Heart right ventricle (tissue), 16 donors: ENCODE measurements at regions of chr5 and their contacts with region 1.

Region 1: DNA sequence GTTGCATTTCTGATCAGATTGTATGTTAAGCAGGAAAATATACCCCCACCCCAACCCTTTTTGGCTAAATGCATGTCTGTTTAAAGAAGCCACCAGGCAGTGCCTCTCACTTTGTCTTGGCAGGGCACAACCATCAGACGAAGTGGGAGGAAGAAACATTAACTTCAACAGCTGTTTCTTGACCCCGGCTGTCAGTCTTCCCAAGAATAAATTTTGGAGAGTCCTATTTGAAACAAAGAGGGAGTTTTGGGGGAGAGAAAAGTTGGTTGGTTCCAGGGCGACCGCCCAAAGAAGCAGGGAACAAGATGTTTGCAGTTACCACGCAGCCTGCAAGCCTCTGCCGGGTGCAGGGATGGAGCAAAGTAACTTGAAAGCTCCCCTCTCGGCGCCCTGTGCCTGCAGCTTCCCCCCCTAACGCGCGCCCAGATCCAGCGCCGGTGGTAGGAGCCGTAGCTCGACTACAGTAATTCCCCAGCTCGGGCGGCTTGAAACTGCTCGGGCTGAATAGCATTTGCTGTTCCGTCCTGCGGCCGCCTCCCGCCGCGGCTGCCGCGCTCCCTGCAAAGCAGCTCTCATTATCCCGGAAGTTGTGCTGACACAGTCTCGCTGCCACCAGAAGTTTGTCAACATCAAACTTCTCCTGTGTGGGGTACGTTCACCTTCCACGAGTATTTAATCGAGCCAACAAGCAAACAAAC is 100.7 kb upstream of the SSBP2 start:
- DNase-seq: peak; percentile 97 to 98
- ATAC-seq: peak; percentile 92 to 97 (median 95)
- H3K4me3 ChIP-seq: peak overlapping the region; percentile 13 to 63 (median 58)
- H3K27ac ChIP-seq: peak overlapping the region; percentile 88 to 97 (median 94)
- H3K4me1 ChIP-seq: peaks cover 13 to 81% (median 54%) of the 10 kb centered on the region in 9 donors
- H3K27me3 ChIP-seq: no peaks in the 10 kb centered on the region
- CTCF ChIP-seq: no peak

Region 2: GRCh38 chr5:81425569-81425968 is 426.1 kb before region 1 on chr5:
- intact Hi-C with region 1: loop called in 5 of 10 experiments (anchors 5 to 10 kb)
- DNase-seq: no peak
- ATAC-seq: peak in 7 of 8 donors; percentile 33 to 81 (median 65)
- H3K4me3 ChIP-seq: no peak overlapping the region
- H3K27ac ChIP-seq: peak overlapping the region in 4 of 10 donors; percentile 14 to 57 (median 30)
- H3K4me1 ChIP-seq: peaks cover 0 to 34% (median 20%) of the 10 kb centered on the region in 9 donors
- H3K27me3 ChIP-seq: no peaks in the 10 kb centered on the region
- CTCF ChIP-seq: peak; percentile 63 to 80 (median 71)

Region 3: GRCh38 chr5:81506900-81507588 is 344.6 kb before region 1 on chr5:
- intact Hi-C with region 1: loop called in 9 of 10 experiments (anchors 1 to 10 kb)
- DNase-seq: peak in 1 of 2 donors; percentile 80
- ATAC-seq: peak; percentile 97 to 100 (median 98)
- H3K4me3 ChIP-seq: peak overlapping the region in 1 of 10 donors; percentile 9
- H3K27ac ChIP-seq: peak overlapping the region in 6 of 10 donors; percentile 45 to 74 (median 61)
- H3K4me1 ChIP-seq: peaks cover 0 to 27% (median 20%) of the 10 kb centered on the region in 9 donors
- H3K27me3 ChIP-seq: no peaks in the 10 kb centered on the region
- CTCF ChIP-seq: peak; percentile 82 to 97 (median 85)

Region 4: GRCh38 chr5:81787474-81788242 is 64.0 kb before region 1 on chr5:
- intact Hi-C with region 1: loop called (anchors 1 to 5 kb)
- DNase-seq: peak in 1 of 2 donors; percentile 86
- ATAC-seq: peak in 7 of 8 donors; percentile 31 to 83 (median 73)
- H3K4me3 ChIP-seq: peak overlapping the region in 3 of 10 donors; percentile 5 to 35 (median 18)
- H3K27ac ChIP-seq: peak overlapping the region in 6 of 10 donors; percentile 9 to 69 (median 46)
- H3K4me1 ChIP-seq: peaks cover 0 to 28% (median 23%) of the 10 kb centered on the region in 9 donors
- H3K27me3 ChIP-seq: no peaks in the 10 kb centered on the region
- CTCF ChIP-seq: no peak

Region 5: GRCh38 chr5:81794226-81794625 is 57.4 kb before region 1 on chr5:
- intact Hi-C with region 1: loop called in 7 of 10 experiments (anchors 1 to 5 kb)
- DNase-seq: no peak
- ATAC-seq: peak in 3 of 8 donors; percentile 42 to 89 (median 73)
- H3K4me3 ChIP-seq: no peak overlapping the region
- H3K27ac ChIP-seq: peak overlapping the region in 1 of 10 donors; percentile 8
- H3K4me1 ChIP-seq: peaks cover 3 to 18% (median 11%) of the 10 kb centered on the region in 9 donors
- H3K27me3 ChIP-seq: no peaks in the 10 kb centered on the region
- CTCF ChIP-seq: no peak

Region 6: DNA sequence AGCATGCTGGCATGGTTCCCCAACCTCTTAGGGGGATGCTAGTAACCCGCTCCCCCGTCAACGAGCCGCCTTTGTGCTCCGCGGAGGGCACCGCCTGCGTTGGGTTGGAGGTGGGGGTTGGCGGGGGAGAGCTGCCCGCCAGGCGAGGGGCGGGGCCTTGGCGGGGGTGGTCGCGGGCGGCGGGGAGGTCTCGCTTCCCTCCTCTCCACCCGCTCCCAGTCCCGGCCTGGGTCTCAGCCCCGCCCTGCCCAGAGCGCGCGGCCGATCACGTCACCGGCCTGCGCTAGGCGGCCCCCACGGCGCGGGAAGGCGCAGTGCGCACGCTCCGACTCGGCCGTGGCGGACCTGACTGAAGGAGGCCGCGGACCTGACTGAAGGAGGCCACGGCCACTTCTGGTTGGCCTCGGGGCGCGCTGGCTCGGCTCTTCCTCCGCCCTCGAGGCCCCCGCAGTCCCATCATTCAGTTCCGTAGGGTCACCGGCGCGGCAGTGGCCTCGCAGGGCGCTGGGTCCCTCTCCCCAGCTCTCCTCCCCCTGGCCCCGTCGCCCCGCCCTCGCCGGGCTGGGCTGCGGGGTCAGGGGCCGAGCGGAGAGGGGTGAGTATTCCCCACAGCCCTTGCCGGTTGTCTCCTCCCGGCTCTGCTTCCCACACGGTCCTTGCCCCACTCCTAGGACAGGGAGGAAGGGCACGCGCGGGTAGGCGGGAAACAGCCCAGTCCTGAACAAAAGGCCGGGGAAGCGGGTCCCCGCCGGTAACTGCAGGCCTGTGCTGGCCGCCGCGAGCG is 120.3 kb after region 1 on chr5 and contains the start of gene ATG10:
- intact Hi-C with region 1: loop called in 7 of 10 experiments (anchors 5 to 10 kb)
- DNase-seq: peak; percentile 91 to 94
- ATAC-seq: peak; percentile 99 to 100 (median 99)
- H3K4me3 ChIP-seq: peak within 1 kb of the TSS; percentile 37 to 86 (median 68)
- H3K27ac ChIP-seq: peak within 1 kb of the TSS; percentile 97 to 100 (median 99)
- H3K4me1 ChIP-seq: peaks cover 0 to 20% (median 0%) of the 10 kb centered on the region in 9 donors
- H3K27me3 ChIP-seq: no peaks in the 10 kb centered on the region
- CTCF ChIP-seq: no peak
- total RNA-seq, gene ATG10: 4.6 to 8.0 (median 7.2) TPM

Region 7: GRCh38 chr5:82165740-82166530 is 314.3 kb after region 1 on chr5:
- intact Hi-C with region 1: loop called in 6 of 10 experiments (anchors 2 to 10 kb)
- DNase-seq: peak; percentile 38 to 77
- ATAC-seq: peak; percentile 97 to 100 (median 99)
- H3K4me3 ChIP-seq: no peak overlapping the region
- H3K27ac ChIP-seq: peak overlapping the region in 6 of 10 donors; percentile 8 to 59 (median 38)
- H3K4me1 ChIP-seq: peaks cover 0 to 33% (median 12%) of the 10 kb centered on the region in 9 donors
- H3K27me3 ChIP-seq: no peaks in the 10 kb centered on the region
- CTCF ChIP-seq: peak; percentile 52 to 85 (median 76)